ENCODE measurements at regions of chr1 and their contacts with region 1.

Region 1: DNA sequence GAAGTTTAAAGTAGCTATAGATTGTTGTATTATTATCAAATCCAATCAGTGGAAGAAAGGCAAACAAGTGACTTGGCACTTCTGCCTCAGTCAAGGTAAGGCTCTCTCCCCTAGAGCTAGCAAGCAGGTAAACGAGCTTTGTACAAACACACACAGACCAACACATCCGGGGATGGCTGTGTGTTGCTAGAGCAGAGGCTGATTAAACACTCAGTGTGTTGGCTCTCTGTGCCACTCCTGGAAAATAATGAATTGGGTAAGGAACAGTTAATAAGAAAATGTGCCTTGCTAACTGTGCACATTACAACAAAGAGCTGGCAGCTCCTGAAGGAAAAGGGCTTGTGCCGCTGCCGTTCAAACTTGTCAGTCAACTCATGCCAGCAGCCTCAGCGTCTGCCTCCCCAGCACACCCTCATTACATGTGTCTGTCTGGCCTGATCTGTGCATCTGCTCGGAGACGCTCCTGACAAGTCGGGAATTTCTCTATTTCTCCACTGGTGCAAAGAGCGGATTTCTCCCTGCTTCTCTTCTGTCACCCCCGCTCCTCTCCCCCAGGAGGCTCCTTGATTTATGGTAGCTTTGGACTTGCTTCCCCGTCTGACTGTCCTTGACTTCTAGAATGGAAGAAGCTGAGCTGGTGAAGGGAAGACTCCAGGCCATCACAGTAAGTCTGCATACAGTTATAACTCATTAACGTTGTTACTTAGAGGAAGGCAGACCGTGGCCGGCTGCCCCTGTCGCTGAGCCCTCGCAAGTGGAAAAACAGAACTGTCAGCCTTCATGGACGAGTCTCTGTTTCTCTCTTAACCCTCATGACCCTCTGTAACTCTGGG is at the start of gene PALMD:
- DNase-seq: peak; percentile 35 to 52 (median 45)
- H3K4me3 ChIP-seq: peak within 1 kb of the TSS; percentile 31
- H3K27ac ChIP-seq: peak within 1 kb of the TSS; percentile 55 to 80
- H3K4me1 ChIP-seq: peaks cover 10% of the 10 kb centered on the region
- H3K27me3 ChIP-seq: no peaks in the 10 kb centered on the region
- CTCF ChIP-seq: no peak
- EP300 ChIP-seq: no peak
- POLR2A ChIP-seq: no peak
- total RNA-seq, gene PALMD: 18.0 to 43.7 (median 30.2) TPM

Region 2: DNA sequence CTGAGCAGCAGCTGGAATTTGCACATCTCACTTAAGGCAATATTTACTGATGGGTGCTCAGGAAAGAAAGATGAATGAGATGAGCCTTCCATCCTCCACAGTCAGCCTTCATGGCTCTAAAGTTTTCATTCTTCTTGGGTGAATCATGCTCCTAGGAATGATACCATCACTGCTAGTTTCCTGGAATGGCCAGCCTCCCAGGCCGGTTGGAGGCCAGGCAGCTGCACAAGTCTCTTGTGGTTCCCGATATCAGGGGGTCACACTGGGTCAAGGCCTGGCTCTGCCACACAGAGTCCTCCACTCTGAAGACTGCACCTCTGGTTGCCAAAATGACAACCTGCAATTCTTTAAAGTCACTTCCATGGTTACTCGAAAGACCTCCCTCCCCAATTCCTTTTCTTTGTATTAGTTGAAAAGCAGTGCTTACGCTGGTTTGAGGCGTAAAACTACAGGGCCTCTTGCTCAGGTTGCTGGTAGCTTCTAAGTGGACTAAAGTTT is 46.2 kb before region 1 on chr1:
- intact Hi-C with region 1: loop called in 1 of 4 experiments (anchors 5 kb)
- DNase-seq: peak; percentile 83 to 93 (median 87)
- H3K4me3 ChIP-seq: no peak overlapping the region
- H3K27ac ChIP-seq: peak overlapping the region in 1 of 2 donors; percentile 17
- H3K4me1 ChIP-seq: peaks cover 9% of the 10 kb centered on the region
- H3K27me3 ChIP-seq: no peaks in the 10 kb centered on the region
- CTCF ChIP-seq: no peak
- EP300 ChIP-seq: peak; percentile 41
- POLR2A ChIP-seq: no peak

Measured in ovary (tissue), 10 donors.